Cardiac septum (tissue), 1 donor: ENCODE measurements at regions of chr11 and their contacts with region 1.

Region 1: DNA sequence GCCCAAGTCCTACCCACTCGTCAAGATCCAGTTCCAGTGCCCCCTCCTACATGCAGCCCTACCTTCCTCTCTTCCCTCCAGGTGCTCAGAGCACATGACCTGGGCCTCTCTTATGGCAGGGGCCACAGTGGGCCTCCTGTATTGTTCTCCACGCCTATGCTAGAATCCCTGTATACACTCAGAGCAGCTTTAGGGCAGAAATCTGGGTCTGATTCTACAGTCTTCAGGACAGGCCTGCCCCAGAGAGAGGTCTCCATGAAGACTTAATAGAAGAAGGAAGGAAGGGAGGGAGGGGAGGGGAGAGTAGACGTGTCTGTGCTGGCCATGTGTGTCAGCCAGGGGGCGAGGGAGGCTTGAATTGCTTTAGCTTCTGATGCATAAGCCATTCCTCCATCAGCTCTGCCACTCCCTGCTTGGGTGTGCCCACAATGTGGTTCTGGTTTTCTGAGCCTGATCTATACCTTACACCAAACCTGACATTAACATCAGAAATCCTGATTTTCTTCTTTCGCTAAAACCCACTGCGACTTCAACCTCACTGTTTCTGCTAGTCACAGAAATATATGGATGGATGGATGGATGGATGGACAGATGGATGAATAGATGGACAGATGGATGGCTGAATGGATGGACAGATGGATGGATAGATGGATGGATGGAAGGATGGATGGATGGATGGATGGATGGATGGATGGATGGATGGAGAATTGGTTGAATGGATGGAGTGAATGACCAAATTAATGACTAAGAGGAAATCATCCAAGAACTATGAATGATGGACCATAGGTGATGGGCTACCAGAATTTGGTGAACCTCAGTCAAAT is 56.6 kb upstream of the PRDM11 start:
- DNase-seq: no peak

Region 2: DNA sequence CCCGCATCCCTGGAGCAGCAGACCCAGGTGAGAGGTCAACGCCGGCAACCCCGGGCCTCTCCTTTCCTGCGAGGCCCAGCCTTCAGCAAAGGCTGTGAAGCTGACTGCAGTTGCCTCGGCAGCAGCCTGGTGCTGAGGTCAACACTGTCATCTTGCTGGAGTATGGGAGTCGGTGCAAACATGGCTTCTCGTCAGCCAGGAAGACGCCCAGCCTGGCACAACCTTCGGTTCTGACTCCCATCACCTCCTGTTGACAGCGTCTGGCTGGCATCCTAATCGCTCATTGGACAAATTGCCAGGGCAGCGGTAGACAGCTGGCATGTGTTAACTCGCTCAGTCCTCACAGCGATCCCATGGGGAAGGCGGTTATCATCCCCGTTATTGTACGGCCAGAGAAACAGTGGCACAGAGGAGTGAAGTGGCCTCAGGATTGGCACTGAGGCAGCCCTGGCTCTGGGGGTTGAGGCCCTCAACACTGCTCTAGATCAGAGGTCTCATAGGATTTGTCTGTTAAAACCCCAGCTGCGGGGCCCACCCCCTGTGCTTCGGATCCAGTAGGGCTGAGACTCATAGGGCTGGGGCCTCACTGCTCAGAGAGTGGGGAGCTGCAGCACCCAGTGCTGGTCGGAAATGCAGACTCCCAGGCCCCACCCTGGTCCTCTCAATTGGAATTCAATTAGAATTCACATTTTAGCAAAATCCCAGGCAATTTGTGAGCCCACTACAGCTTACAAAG is 99.9 kb before region 1 on chr11:
- intact Hi-C with region 1: loop called (anchors 1 kb)
- DNase-seq: peak; percentile 90

Region 3: DNA sequence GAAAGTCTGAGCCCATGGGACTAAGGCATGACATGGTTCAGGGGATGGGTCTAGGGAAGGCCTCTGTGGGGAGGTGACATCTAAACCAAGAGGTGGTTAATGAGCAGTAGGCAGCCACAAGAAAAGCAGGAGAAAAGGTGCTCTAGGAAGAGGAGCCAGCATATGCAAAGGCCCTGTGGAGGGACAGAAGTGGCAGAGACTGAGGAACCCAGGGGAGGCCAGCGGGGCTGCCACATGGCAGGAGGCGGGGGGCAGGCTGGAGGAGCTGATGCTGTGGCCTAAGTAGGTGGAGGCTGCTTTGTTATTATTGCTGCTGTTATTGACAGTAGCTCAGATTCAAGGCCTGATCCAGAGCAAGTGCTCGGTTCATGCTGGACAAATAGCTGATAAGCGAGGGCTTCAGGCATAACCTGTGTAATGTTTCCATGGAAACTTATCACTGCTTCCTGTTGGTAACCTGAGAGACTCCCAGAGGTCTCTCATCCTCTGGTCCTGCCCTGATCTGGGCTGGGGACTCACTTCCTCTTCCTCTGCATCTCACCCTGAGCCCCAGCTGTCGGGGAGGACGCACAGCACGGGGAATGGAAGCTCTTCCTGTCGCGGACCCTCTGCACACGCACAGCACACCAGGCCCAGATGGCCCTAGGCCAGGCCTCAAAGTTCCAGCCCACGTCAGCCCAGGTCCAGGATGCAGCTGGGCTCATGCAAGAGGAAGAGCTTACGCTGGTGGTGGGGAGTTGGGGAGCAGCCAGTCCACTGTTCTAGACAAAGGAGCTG is 64.0 kb before region 1 on chr11:
- intact Hi-C with region 1: loop called (anchors 5 kb)
- DNase-seq: no peak

Region 4: DNA sequence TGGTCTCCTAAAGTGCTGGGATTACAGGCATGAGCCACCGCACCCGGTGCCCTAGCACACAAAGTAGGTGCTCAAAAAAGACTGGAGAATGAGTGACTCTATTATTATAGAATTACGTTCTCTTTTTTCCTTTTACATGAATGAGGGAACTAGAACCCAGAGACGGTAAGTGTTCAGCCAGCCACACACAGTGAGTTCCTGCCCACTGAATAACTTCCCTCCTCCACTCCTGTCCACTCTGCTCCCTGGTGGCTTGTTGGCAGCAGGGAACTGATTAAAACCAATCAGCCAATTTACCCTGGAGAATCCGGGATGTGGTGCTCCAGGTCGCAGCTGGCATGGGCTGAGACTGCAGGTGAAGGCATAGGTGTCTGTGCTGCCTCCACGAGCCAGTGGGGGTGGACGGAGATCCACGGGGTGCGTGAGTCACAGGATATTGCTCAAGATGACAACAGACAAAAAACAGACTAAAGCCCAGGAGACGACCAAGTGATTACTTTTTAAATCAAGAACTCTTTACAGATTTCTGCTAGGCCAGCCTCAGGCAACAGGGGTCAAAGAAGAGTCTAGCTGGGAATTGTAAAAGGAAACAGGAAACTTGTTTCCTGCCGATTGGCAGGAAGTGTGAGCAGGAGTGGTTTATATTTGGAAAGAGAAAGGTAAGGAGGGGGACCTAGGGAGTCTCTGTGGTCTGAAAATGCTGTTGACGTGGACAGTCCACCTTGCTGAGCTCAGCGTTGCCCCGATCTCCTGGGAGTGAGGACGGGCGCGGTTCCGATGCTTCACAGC is 44.0 kb before region 1 on chr11:
- intact Hi-C with region 1: loop called (anchors 1 kb)
- DNase-seq: peak; percentile 87